ENCODE measurements at regions of chr14 and their contacts with region 1.

Region 1: GRCh38 chr14:45785240-45785639 is 532.2 kb upstream of the MIS18BP1 start:
- DNase-seq: peak; percentile 76
- H3K4me3 ChIP-seq: no peak overlapping the region
- H3K27ac ChIP-seq: peak overlapping the region; percentile 68
- H3K4me1 ChIP-seq: peaks cover 20% of the 10 kb centered on the region
- H3K27me3 ChIP-seq: no peaks in the 10 kb centered on the region
- CTCF ChIP-seq: no peak

Region 2: GRCh38 chr14:45633220-45634004 is 151.8 kb before region 1 on chr14:
- CTCF ChIA-PET with region 1: no interaction called
- dilution Hi-C with region 1: no loop called
- in situ Hi-C with region 1: no loop called
- intact Hi-C with region 1: loop called (anchors 5 kb)
- DNase-seq: peak; percentile 72
- H3K4me3 ChIP-seq: peak overlapping the region in 2 of 3 experiments; percentile 2 to 17
- H3K27ac ChIP-seq: peak overlapping the region; percentile 35
- H3K4me1 ChIP-seq: peaks cover 18% of the 10 kb centered on the region
- H3K27me3 ChIP-seq: no peaks in the 10 kb centered on the region
- CTCF ChIP-seq: no peak

Measured in mammary epithelial cell (primary cell).